Sciatic nerve (tissue), 2 donors: ENCODE measurements at regions of chr17 and their contacts with region 1.

Region 1: DNA sequence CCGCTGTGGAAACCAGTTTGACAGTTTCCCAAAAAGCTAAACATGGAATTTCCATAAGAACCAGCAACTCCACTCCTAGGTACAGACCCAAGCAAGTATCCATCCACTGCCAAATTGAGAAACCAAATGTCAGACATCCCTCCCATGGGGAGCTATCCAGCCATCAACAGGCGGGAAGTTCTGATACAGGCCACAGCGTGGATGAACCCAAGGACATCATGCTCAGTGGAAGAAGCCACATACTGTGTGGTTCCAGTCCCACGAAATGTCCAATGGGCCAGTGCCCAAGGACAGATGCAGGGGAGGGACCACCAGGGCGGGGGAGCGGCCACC is 12.6 kb upstream of the BAIAP2 start:
- DNase-seq: no peak
- ATAC-seq: no peak

Region 2: DNA sequence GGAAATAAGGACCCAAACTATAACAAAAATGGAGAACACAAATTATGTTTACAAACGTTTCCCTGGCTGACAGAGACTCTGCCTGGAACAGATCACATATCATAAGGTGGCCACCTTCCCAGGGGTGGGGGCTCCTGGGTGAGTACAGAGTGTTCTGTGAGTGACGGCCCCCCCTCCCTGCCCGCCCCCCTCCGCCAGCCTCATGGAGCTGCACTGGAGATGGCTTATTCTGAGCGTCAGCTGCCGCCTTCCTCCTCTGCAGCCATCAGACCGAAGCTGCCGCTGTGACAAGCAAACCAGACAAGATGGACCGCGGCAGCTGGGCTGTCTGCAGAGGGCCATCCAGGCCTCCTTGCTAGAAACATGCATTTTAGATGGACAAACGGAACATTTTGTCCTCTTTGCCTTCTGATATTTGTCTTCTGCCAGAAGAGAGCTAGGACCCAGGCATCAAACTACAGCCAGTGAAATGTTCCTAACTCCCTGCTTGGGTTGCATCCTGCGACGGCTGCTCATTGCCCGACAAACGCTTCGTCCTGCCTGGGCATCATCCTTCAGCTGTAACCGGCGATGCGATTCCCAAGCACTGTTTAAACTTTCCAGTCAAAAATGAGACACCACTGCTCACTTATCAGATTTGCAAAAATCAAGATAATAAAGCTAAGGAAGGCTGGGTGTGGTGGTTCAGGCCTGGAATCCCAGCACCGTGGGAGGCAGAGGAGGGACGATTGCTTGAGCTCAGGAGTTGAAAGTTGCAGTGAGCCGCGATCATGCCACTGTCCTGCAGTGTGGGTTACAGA is 493.0 kb before region 1 on chr17:
- intact Hi-C with region 1: no loop called
- DNase-seq: no peak
- ATAC-seq: no peak

Region 3: DNA sequence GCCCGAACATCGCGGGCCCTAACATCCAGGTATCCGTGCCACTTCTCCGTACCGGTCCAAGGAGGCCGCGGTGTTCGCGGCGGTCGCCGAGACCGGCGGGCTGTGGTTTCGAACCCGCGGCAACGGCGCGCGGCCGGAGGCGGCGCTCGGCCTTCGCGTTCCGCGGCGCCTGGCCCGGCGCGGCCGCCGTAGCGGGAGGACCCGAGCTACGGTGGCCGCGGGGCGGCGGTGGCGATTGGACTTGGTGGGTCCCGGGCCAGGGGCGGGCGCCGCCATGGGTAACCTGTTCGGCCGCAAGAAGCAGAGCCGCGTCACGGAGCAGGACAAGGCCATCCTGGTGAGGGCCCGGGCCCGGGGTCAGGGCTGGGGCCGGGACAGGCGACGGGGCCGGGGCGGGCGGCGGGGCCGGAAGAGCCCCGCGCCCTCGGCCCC is 30.6 kb before region 1 on chr17 and contains the start of gene CHMP6:
- intact Hi-C with region 1: loop called (anchors 2 kb)
- DNase-seq: peak; percentile 86
- ATAC-seq: peak; percentile 44
- total RNA-seq, gene CHMP6: 26.8 TPM